PC-3 (cell line): ENCODE measurements at regions of chrX and their contacts with region 1.

Region 1: DNA sequence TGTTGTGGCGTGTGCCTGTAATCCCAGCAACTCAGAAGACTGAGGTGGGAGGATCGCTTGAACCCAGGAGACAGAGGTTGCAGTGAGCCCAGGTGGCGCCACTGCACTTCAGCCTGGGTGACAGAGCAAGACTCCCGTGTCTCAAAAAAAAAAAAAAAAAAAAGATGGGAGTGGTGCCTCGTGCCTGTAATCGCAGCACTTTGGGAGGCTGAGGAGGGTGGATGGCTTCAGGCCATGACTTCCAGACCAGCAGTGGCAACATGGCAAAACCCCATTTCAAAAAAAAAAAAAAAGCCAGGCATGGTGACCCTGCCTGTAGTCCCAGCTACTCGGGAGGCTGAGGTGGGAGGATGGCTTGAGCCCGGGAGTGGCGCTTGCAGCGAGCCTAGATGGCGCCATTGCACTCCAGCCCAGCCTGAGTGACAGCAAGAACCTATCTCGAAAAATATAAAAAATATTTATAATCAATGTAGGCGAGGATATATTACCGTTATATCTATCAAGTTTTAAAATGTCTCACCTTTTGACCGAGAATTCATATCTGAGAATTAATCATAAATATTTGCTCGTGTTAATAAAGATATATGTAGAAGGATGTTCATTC is 27.0 kb downstream of the EIF2S3 start:
- DNase-seq: peak; percentile 72
- ATAC-seq: peak; percentile 77
- H3K4me3 ChIP-seq: no peak overlapping the region; the same call in 1 of the 2 replicates
- H3K27ac ChIP-seq: no peak overlapping the region
- H3K4me1 ChIP-seq: peaks cover 4% of the 10 kb centered on the region; the same call in 1 of the 2 replicates
- H3K27me3 ChIP-seq: no peaks in the 10 kb centered on the region
- CTCF ChIP-seq: peak; percentile 64

Region 2: DNA sequence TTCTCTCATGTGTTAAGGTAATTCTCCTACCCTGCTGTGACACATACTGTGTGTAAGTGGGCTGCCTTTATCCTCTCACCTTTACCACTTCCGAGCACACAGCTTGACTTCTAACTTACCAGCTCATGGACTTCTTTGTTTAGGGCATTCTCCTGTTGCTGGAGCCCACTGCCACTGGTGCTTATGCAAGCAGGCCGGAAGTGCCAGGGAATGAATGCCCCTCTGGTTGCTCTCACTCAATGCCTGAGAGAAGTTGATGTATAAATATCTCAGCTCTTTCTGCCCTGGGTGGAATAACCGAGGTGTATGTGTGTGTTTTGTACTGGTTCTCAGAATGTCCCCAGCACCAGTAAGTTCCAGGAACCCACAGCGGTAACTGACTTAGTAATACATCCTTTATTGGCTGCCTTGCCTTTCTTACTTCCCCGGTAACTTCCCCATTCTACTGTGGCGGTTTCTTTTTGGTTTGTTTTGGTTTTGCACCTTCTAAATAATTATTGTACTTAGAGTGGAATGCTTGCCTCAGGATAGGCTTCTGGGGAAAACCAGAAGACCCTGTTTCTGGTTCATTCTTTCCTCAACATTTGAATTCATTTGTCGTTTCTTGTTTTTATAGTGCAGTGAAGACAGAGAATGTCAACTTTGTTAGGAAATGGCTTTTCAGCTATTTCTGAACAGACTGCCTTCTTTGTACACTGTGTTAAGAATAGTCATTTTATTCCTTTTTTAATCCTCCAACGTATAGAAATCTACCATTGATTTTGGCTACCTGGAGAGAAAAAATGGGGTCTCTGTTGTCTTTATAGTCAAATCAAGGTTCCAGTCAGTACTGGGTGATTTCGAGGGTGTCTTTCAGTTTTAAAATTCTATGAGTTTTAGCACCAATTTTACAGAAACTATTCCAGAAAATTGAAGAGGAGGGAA is 128.5 kb before region 1 on chrX:
- CTCF ChIA-PET with region 1: no interaction called
- POLR2A ChIA-PET with region 1: no interaction called
- intact Hi-C with region 1: no loop called
- DNase-seq: no peak
- ATAC-seq: no peak
- H3K4me3 ChIP-seq: no peak overlapping the region
- H3K27ac ChIP-seq: no peak overlapping the region
- H3K4me1 ChIP-seq: no peaks in the 10 kb centered on the region; the same call in 1 of the 2 replicates
- H3K27me3 ChIP-seq: no peaks in the 10 kb centered on the region
- CTCF ChIP-seq: no peak

Region 3: GRCh38 chrX:24124244-24124799 is 42.6 kb after region 1 on chrX:
- CTCF ChIA-PET with region 1: no interaction called
- POLR2A ChIA-PET with region 1: no interaction called
- intact Hi-C with region 1: no loop called
- DNase-seq: no peak
- ATAC-seq: no peak; the same call in 1 of the 2 replicates
- H3K4me3 ChIP-seq: no peak overlapping the region
- H3K27ac ChIP-seq: no peak overlapping the region
- H3K4me1 ChIP-seq: peaks cover 6% of the 10 kb centered on the region; the same call in 1 of the 2 replicates
- H3K27me3 ChIP-seq: no peaks in the 10 kb centered on the region
- CTCF ChIP-seq: no peak

Region 4: GRCh38 chrX:24241822-24242648 is 160.3 kb after region 1 on chrX:
- CTCF ChIA-PET with region 1: no interaction called
- POLR2A ChIA-PET with region 1: no interaction called
- intact Hi-C with region 1: loop called (anchors 1 kb)
- DNase-seq: peak; percentile 49
- ATAC-seq: peak; percentile 67
- H3K4me3 ChIP-seq: no peak overlapping the region
- H3K27ac ChIP-seq: no peak overlapping the region
- H3K4me1 ChIP-seq: no peaks in the 10 kb centered on the region; the same call in 1 of the 2 replicates
- H3K27me3 ChIP-seq: no peaks in the 10 kb centered on the region
- CTCF ChIP-seq: peak; percentile 61